Mammary epithelial cell (primary cell): ENCODE measurements at regions of chr12 and their contacts with region 1.

Region 1: DNA sequence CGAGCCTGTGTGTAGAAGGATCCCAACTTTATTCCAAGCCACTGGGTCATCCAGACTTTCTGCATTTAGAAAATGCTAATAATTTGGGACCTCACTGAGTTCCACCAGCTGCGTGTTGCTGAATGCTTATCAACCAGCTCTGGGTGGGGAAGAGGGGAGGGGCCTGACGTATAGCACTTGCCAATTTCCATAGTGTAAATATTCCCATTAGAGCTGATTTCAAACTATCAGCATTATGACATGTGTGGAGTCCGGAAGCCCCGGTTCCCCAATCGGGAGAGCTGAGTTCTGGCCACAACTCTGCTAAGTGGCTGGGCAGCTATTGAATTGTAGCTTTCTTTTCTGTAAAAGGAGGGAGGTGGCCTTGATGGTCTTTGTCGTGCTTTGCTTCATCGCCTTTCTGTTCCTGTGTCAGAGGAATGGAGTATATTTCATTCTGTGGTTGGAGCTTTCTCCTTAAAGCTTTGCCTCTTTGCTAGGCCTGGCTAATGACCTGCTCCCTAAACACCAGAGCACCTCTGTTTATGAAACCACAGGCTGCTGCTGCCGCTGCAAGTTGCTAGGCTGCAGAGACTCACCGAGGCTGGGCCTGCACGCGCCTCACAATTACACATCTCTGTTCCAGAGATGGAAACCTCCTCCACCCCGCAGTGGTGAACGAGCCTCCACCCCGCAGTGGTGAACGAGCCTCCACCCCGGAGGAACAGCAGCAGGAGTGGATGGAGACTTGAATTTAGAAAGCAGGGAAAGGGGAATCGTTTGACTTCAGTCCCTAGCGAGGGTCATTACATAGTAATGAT is 7.7 kb upstream of the BCL7A start:
- DNase-seq: no peak
- H3K4me3 ChIP-seq: no peak overlapping the region
- H3K27ac ChIP-seq: no peak overlapping the region
- H3K4me1 ChIP-seq: no peaks in the 10 kb centered on the region
- H3K27me3 ChIP-seq: no peaks in the 10 kb centered on the region
- CTCF ChIP-seq: no peak

Region 2: GRCh38 chr12:121905746-121906145 is 108.2 kb before region 1 on chr12:
- CTCF ChIA-PET with region 1: no interaction called
- dilution Hi-C with region 1: loop called (anchors 5 kb)
- in situ Hi-C with region 1: no loop called
- intact Hi-C with region 1: no loop called
- DNase-seq: peak; percentile 20
- H3K4me3 ChIP-seq: no peak overlapping the region
- H3K27ac ChIP-seq: no peak overlapping the region
- H3K4me1 ChIP-seq: no peaks in the 10 kb centered on the region
- H3K27me3 ChIP-seq: no peaks in the 10 kb centered on the region
- CTCF ChIP-seq: no peak